Thyroid gland (tissue), 4 donors: ENCODE measurements at regions of chr17 and their contacts with region 1.

Region 1: DNA sequence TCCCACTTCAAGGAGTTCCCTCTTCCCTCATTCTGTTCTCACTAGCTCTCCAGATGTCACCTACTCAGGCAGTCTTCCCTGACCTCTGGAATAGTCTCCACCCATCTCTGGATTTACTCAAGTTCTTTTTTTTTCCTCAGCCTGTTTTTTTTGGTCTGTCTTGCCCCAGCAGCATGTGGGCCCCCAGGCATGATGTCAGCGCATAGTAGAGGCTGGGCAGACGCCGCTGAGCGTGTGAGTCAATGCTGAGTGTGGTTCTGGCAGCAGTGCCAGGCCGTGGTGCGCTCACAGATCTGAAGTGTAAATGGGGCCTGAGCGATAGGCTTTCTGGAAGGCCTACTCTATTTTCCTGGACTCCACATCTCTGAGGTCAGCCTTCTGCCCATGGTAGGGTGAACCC is 2.7 kb upstream of the KCNJ18 start:
- DNase-seq: peak; percentile 18 to 27
- H3K4me3 ChIP-seq: no peak overlapping the region
- H3K27ac ChIP-seq: no peak overlapping the region
- H3K4me1 ChIP-seq: no peaks in the 10 kb centered on the region
- H3K27me3 ChIP-seq: no peaks in the 10 kb centered on the region
- CTCF ChIP-seq: no peak
- POLR2A ChIP-seq: no peak

Region 2: GRCh38 chr17:21400816-21401593 is 288.6 kb before region 1 on chr17:
- intact Hi-C with region 1: loop called (anchors 10 kb)
- DNase-seq: no peak
- H3K4me3 ChIP-seq: no peak overlapping the region
- H3K27ac ChIP-seq: no peak overlapping the region
- H3K4me1 ChIP-seq: no peaks in the 10 kb centered on the region
- H3K27me3 ChIP-seq: no peaks in the 10 kb centered on the region
- CTCF ChIP-seq: no peak
- POLR2A ChIP-seq: no peak

Region 3: DNA sequence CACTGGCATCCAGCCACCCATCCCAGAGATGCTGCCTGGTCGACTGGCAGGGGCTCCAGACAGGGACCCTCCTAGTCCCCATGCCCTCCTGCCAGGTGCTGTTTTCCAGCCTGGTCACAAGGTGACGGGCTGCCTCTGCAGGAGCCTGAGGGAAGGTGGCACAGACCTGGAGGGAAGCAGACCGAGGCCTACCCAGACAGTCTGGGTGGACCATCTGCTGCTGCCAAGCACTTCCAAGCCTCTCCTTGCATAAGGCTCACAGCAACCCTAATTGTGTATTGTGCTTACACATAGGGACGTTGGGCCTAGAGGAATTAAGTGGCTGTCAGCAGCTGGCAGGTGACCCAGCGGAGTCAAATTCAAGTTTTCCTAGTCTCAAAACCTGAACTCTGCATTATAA is 87.4 kb before region 1 on chr17:
- intact Hi-C with region 1: no loop called
- DNase-seq: no peak
- H3K4me3 ChIP-seq: no peak overlapping the region
- H3K27ac ChIP-seq: no peak overlapping the region
- H3K4me1 ChIP-seq: no peaks in the 10 kb centered on the region
- H3K27me3 ChIP-seq: no peaks in the 10 kb centered on the region
- CTCF ChIP-seq: no peak
- POLR2A ChIP-seq: no peak